Endothelial cell of umbilical vein (primary cell): ENCODE measurements at regions of chr2 and their contacts with region 1.

Region 1: GRCh38 chr2:150938527-150938926 is 323.1 kb downstream of the RBM43 start:
- DNase-seq: no peak
- H3K4me3 ChIP-seq: no peak overlapping the region
- H3K27ac ChIP-seq: no peak overlapping the region
- H3K4me1 ChIP-seq: no peaks in the 10 kb centered on the region
- H3K27me3 ChIP-seq: no peaks in the 10 kb centered on the region
- CTCF ChIP-seq: no peak
- POLR2A ChIP-seq: no peak

Region 2: GRCh38 chr2:150924878-150925277 is 13.6 kb before region 1 on chr2:
- CTCF ChIA-PET with region 1: interaction called, 13 read pairs
- POLR2A ChIA-PET with region 1: no interaction called
- dilution Hi-C with region 1: no loop called
- intact Hi-C with region 1: no loop called
- DNase-seq: no peak
- H3K4me3 ChIP-seq: no peak overlapping the region
- H3K27ac ChIP-seq: no peak overlapping the region
- H3K4me1 ChIP-seq: no peaks in the 10 kb centered on the region
- H3K27me3 ChIP-seq: no peaks in the 10 kb centered on the region
- CTCF ChIP-seq: no peak
- POLR2A ChIP-seq: no peak